ENCODE measurements at regions of chr13 and their contacts with region 1.

Region 1: DNA sequence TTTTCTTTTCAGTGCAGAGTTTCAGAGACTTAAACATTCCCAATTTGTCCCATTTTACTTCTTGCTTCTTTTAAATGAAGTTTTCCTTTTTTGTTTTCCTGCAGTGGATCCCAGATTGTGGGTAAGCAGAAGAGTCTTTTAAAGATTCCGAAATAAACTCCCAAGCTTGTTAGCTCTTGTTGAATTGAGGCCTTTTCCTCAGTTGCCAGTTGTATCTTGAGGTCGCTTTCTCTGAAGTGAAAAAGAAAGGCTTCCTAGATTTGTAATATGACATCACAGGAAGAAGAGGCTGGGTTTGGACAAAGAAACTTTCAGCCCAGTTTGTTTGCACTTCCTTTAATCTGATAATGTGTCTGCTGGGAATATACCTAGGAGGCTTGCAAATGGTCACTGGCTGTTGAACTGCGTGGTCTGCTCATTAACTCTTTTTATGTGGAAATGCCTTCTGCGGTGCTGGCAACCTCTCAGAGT is at the start of gene LPAR6:
- DNase-seq: no peak
- total RNA-seq, gene LPAR6: 12.5 TPM

Region 2: GRCh38 chr13:48334534-48335127 is 78.3 kb before region 1 on chr13:
- intact Hi-C with region 1: loop called (anchors 5 kb)
- DNase-seq: no peak

Region 3: DNA sequence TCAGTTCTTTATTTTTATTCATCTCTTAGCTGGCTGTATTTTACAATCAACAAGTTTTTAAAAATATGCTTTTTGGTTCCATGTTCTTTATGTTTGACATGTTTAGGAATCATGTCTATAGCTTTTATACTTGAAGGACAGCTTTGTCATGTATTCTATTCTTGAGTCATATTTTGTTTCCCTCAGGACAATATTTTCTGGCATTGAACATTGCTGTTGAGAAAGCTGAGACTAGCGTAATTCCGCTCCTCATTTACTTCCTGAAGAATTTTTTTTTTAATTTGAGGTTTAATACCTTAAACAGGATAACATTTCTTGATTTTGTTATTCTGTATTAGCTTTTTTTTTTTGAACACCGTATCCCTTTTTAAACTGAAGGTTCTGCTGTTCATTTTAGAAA is 56.2 kb before region 1 on chr13:
- intact Hi-C with region 1: no loop called
- DNase-seq: no peak

Region 4: DNA sequence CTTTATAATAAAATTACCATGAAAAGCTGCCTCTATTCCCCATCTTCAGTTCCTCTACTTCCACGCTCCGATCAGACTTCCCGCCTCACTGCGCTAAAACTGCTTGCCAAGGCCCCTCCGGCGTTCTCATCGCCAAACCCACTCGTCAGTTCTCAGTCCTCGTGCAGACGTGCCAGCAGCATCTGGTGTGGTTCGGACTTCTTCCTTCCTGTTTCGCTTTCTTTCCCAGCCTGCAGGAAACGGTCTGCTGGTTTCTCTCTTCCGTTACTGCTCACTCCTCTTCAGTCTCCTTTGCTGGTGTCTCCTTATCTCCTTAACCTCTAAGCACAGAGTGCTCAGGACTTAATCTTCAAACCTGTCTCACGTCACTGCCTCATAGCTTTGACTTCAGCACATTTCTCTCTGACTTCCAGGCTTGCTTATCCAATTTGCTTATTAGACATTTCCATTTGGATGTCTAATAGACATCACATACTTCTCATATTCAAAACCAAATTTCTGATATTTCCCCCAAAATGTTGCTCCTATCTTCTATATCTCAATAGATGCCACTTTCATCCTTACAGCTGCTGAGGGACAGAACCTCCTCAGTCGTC is 79.7 kb after region 1 on chr13:
- intact Hi-C with region 1: loop called (anchors 5 kb)
- DNase-seq: peak; percentile 91